ENCODE measurements at regions of chr16 and their contacts with region 1.

Region 1: GRCh38 chr16:56530872-56531271 is 11.0 kb upstream of the BBS2 start:
- DNase-seq: no peak
- H3K4me3 ChIP-seq: no peak overlapping the region
- H3K27ac ChIP-seq: no peak overlapping the region
- H3K4me1 ChIP-seq: peaks cover 10% of the 10 kb centered on the region
- H3K27me3 ChIP-seq: peaks cover under 1 to 4% of the 10 kb centered on the region in 2 experiments
- CTCF ChIP-seq: no peak
- POLR2A ChIP-seq: no peak

Region 2: GRCh38 chr16:56519459-56520250 is 11.2 kb before region 1 on chr16 and contains the start of gene BBS2:
- CTCF ChIA-PET with region 1: interaction called, 10 read pairs
- POLR2A ChIA-PET with region 1: no interaction called
- dilution Hi-C with region 1: no loop called
- intact Hi-C with region 1: loop called (anchors 1 kb)
- DNase-seq: peak; percentile 89
- H3K4me3 ChIP-seq: peak within 1 kb of the TSS; percentile 61 to 89 (median 76)
- H3K27ac ChIP-seq: peak within 1 kb of the TSS; percentile 13
- H3K4me1 ChIP-seq: peaks cover 13% of the 10 kb centered on the region
- H3K27me3 ChIP-seq: no peaks in the 10 kb centered on the region
- CTCF ChIP-seq: no peak
- POLR2A ChIP-seq: peak; percentile 89
- total RNA-seq, gene BBS2: 33.3 and 44.8 TPM in 2 replicates